ENCODE measurements at regions of chr12 and their contacts with region 1.

Region 1: DNA sequence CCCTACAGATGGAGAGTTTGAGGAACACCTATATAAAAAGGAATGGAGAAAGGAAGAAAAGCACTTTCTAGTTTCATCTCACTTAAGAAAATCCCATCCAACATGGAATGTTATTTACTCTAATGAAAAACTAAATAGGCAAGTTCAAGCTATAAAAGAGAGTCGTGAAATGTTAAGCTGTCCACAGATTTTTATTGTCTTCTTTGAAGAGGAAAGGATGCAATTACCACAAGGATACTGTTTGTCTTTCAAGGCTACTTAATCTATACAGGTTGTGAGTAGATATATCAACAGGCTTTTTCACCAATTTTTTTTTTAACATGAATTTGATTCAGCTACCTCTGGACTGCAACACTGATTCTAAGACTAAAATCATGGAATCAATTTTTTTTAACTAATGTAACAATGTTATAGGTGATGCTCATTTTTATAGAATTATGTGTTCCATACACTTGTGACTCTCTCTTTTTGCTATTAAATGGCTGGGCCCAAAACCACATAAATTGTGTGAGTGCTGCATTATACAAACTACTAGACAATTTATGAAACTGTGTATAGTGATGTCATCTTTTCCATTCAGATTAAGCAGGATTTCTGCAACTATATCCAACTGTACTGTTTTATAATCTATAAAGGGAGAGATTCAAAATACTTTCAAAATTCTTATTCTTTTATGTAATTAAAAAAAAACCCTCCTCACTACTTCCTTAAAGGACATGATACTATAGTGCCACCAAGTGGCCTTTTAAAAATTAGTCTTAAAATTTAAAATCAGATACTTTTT is 26.8 kb upstream of the BMAL2 start:
- DNase-seq: no peak
- ATAC-seq: peak; percentile 26; the same call in 2 of the 3 replicates
- H3K4me3 ChIP-seq: no peak overlapping the region
- H3K27ac ChIP-seq: no peak overlapping the region
- H3K4me1 ChIP-seq: peaks cover 35% of the 10 kb centered on the region
- H3K27me3 ChIP-seq: no peaks in the 10 kb centered on the region
- CTCF ChIP-seq: peak in 1 of 3 experiments; percentile 15; a peak in 1 of 6 replicates
- EP300 ChIP-seq: no peak
- POLR2A ChIP-seq: no peak
- RAD21 ChIP-seq: peak; percentile 54; the same call in 1 of the 2 replicates

Region 2: DNA sequence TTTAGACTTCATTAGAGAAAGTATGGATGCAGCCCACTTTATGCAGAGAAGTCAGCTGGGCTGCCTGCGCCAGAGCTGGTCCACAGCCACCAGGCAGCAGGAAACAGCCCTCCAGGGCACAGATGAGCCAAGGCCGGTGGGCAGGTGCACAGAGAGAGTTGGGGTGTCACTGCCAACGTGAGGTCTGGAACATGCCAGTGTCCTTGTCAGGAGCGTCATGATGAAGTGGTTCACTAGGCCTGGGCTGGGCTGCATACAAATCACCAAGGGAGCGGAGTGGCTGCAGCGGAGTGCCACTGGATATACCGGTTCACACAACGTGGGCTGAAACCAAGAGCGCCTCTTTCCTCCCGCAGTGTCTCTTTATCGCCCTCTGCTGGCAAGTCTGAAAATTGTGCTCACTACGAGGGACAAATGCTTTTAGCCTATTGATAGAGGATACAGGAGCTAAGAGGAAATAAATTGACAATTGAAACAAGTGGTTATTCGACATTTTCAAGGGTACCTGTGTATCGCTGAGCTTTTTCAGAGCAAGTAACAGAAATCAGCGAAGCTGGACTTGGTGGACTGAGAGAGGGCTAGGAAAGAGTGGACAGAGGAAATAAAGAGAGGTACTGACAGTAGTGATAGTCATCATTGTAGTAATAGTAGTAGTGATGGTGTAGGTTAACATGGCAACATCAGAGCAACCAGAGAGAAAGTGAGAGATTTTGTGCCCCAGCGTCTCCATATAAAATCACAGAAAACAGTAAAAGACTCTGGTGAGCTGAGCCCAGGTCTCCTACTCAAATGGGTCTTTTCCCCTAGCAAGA is 420.9 kb before region 1 on chr12:
- CTCF ChIA-PET with region 1: interaction called, 11 read pairs
- POLR2A ChIA-PET with region 1: no interaction called
- RAD21 ChIA-PET with region 1: interaction called, 16 read pairs
- SMC1A ChIA-PET with region 1: interaction called, 10 read pairs
- in situ Hi-C with region 1: no loop called
- intact Hi-C with region 1: no loop called
- DNase-seq: peak; percentile 65
- ATAC-seq: peak; percentile 98
- H3K4me3 ChIP-seq: no peak overlapping the region
- H3K27ac ChIP-seq: no peak overlapping the region
- H3K4me1 ChIP-seq: peaks cover 4% of the 10 kb centered on the region; the same call in 1 of the 2 replicates
- H3K27me3 ChIP-seq: no peaks in the 10 kb centered on the region
- CTCF ChIP-seq: peak; percentile 95 to 98 (median 98)
- EP300 ChIP-seq: no peak
- POLR2A ChIP-seq: no peak
- RAD21 ChIP-seq: peak; percentile 96

Region 3: GRCh38 chr12:27123642-27124041 is 182.2 kb before region 1 on chr12:
- CTCF ChIA-PET with region 1: interaction called, 19 read pairs
- POLR2A ChIA-PET with region 1: no interaction called
- RAD21 ChIA-PET with region 1: interaction called, 4 read pairs
- SMC1A ChIA-PET with region 1: interaction called, 22 read pairs
- in situ Hi-C with region 1: no loop called
- intact Hi-C with region 1: no loop called
- DNase-seq: no peak
- ATAC-seq: peak; percentile 57
- H3K4me3 ChIP-seq: no peak overlapping the region
- H3K27ac ChIP-seq: no peak overlapping the region
- H3K4me1 ChIP-seq: no peaks in the 10 kb centered on the region
- H3K27me3 ChIP-seq: no peaks in the 10 kb centered on the region
- CTCF ChIP-seq: peak; percentile 11 to 32 (median 24); a peak in 1 of 6 replicates
- EP300 ChIP-seq: no peak
- POLR2A ChIP-seq: no peak
- RAD21 ChIP-seq: peak; percentile 60

Region 4: GRCh38 chr12:27199638-27200300 is 106.1 kb before region 1 on chr12:
- CTCF ChIA-PET with region 1: interaction called, 8 read pairs
- POLR2A ChIA-PET with region 1: no interaction called
- RAD21 ChIA-PET with region 1: interaction called, 43 read pairs
- SMC1A ChIA-PET with region 1: interaction called, 7 read pairs
- in situ Hi-C with region 1: no loop called
- intact Hi-C with region 1: no loop called
- DNase-seq: no peak
- ATAC-seq: peak; percentile 41; the same call in 2 of the 3 replicates
- H3K4me3 ChIP-seq: no peak overlapping the region
- H3K27ac ChIP-seq: no peak overlapping the region
- H3K4me1 ChIP-seq: peaks cover 6% of the 10 kb centered on the region; the same call in 1 of the 2 replicates
- H3K27me3 ChIP-seq: no peaks in the 10 kb centered on the region
- CTCF ChIP-seq: no peak
- EP300 ChIP-seq: no peak
- POLR2A ChIP-seq: no peak
- RAD21 ChIP-seq: no peak

Region 5: DNA sequence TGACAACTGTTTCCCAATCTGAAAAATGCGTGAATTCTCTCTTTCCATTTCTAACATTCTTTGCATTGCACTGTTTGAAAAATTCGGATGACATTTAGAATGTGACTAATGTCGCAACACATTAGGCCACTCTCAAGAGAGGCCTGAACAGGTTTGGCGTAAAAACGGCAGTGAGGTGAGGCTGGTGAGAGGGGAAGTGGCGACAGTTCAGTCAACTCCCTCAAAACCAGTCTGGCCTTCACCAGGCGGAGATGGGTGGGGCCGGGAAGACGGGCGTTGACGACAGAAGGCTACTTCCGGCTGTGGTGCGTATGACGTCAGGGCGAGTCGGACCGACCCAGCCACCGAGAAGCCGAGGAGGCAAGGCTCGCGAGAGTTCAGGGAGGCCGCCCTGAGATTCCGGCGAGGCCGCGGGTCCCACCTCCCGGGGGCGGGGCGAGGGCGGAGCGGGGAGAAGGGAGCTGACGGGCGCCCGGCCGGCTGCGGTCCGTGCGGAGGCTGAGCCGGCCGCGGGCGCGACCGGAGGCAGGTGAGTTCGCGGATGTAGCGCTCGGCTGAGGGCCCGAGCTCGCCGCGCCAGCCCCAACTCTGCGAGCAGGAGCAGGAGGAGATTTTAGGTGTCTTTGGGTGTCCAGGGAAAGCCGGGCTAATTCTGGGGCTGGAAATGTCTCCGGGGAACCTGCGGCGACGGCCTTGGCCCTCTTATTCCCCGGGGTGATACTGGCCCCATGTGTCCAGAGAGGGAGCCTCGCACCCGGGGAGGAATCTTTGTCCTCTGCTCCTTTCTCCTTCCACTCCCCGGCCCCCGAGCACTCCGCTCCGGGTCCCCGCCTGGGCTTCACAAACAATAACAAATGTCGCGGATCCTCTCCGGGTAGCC is 61.8 kb before region 1 on chr12 and contains the start of gene STK38L:
- CTCF ChIA-PET with region 1: interaction called, 179 read pairs
- POLR2A ChIA-PET with region 1: interaction called, 11 read pairs
- RAD21 ChIA-PET with region 1: interaction called, 282 read pairs
- SMC1A ChIA-PET with region 1: interaction called, 269 read pairs
- in situ Hi-C with region 1: no loop called
- intact Hi-C with region 1: loop called (anchors 2 kb)
- DNase-seq: peak; percentile 86
- ATAC-seq: peak; percentile 90
- H3K4me3 ChIP-seq: peak within 1 kb of the TSS; percentile 86
- H3K27ac ChIP-seq: peak within 1 kb of the TSS; percentile 93
- H3K4me1 ChIP-seq: peaks cover 13% of the 10 kb centered on the region; the same call in 1 of the 2 replicates
- H3K27me3 ChIP-seq: no peaks in the 10 kb centered on the region
- CTCF ChIP-seq: peak; percentile 18 to 38 (median 21); a peak in 4 of 6 replicates
- EP300 ChIP-seq: peak in 1 of 2 experiments; percentile 29; a peak in 1 of 4 replicates
- POLR2A ChIP-seq: peak; percentile 98
- RAD21 ChIP-seq: peak; percentile 46
- polyA plus RNA-seq, gene STK38L: 43.0 to 50.2 TPM

Region 6: GRCh38 chr12:27293463-27293862 is 12.4 kb before region 1 on chr12:
- CTCF ChIA-PET with region 1: interaction called, 125 read pairs
- POLR2A ChIA-PET with region 1: interaction called, 24 read pairs
- RAD21 ChIA-PET with region 1: interaction called, 215 read pairs
- SMC1A ChIA-PET with region 1: interaction called, 113 read pairs
- in situ Hi-C with region 1: no loop called
- intact Hi-C with region 1: no loop called
- DNase-seq: no peak
- ATAC-seq: no peak
- H3K4me3 ChIP-seq: no peak overlapping the region
- H3K27ac ChIP-seq: no peak overlapping the region
- H3K4me1 ChIP-seq: peaks cover 18% of the 10 kb centered on the region
- H3K27me3 ChIP-seq: no peaks in the 10 kb centered on the region
- CTCF ChIP-seq: no peak
- EP300 ChIP-seq: no peak
- POLR2A ChIP-seq: no peak
- RAD21 ChIP-seq: no peak

Region 7: GRCh38 chr12:27424631-27425230 is 118.9 kb after region 1 on chr12:
- CTCF ChIA-PET with region 1: no interaction called
- POLR2A ChIA-PET with region 1: no interaction called
- RAD21 ChIA-PET with region 1: no interaction called
- SMC1A ChIA-PET with region 1: no interaction called
- in situ Hi-C with region 1: no loop called
- intact Hi-C with region 1: no loop called
- DNase-seq: no peak
- ATAC-seq: peak; percentile 62
- H3K4me3 ChIP-seq: no peak overlapping the region
- H3K27ac ChIP-seq: no peak overlapping the region
- H3K4me1 ChIP-seq: no peaks in the 10 kb centered on the region
- H3K27me3 ChIP-seq: no peaks in the 10 kb centered on the region
- CTCF ChIP-seq: peak; percentile 38 to 48 (median 39); a peak in 5 of 6 replicates
- EP300 ChIP-seq: no peak
- POLR2A ChIP-seq: no peak
- RAD21 ChIP-seq: peak; percentile 45

Measured in GM12878 (cell line).